Activated CD4-positive, alpha-beta T cell treated with anti-CD3 and anti-CD28 coated beads for 36 hours (primary cell): ENCODE measurements at regions of chr7 and their contacts with region 1.

Region 1: DNA sequence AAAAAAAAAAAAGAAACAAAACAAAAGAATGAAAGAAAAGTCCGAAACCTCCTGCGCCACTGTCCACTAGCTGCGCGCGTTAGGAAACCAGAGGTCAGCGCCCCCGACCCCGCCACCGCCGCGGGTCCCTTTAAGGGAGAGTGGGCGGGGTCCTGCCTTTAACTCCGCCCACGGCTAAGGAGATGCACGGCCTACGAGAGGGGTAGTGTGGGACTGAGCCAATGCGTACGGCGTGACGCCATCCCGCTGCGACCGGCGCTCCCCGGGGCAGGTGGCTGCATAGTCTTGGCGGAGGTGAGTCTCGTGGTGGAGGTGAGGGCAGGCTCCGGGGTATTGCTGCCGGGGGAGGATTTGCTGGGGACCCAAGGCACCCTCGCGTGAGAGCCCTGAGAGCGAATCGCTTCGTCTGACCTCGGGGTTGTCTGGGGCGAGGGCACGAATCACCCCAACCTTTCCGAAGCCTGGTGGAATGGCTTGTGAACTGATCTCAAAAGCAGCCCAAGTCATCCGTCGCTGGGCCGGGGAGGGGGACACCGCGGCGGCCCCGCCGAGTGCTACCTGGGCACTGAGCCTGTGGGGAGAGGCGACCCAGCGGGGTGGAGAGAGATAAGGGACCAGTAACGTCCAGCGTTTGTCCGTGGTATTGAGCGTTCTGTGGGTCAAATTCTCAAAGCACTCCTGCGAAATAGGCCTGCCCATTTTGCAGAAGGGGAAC is at the start of gene MRPS17:
- DNase-seq: peak; percentile 96
- ATAC-seq: peak; percentile 100
- H3K4me3 Mint-ChIP-seq: peak within 1 kb of the TSS; percentile 98
- H3K27ac Mint-ChIP-seq: peak within 1 kb of the TSS; percentile 97
- H3K4me1 Mint-ChIP-seq: peaks cover 16% of the 10 kb centered on the region
- H3K27me3 Mint-ChIP-seq: peaks cover 2% of the 10 kb centered on the region
- total RNA-seq, gene MRPS17: 16.6 to 26.8 TPM

Region 2: GRCh38 chr7:55774326-55775064 is 177.3 kb before region 1 on chr7:
- CTCF ChIA-PET with region 1: no interaction called
- POLR2A ChIA-PET with region 1: no interaction called
- intact Hi-C with region 1: loop called in 1 of 2 experiments (anchors 10 kb)
- DNase-seq: no peak
- ATAC-seq: no peak
- H3K4me3 Mint-ChIP-seq: no peak overlapping the region
- H3K27ac Mint-ChIP-seq: no peak overlapping the region
- H3K4me1 Mint-ChIP-seq: no peaks in the 10 kb centered on the region
- H3K27me3 Mint-ChIP-seq: no peaks in the 10 kb centered on the region

Region 3: GRCh38 chr7:55964261-55965099 is 12.7 kb after region 1 on chr7 and contains the start of gene NIPSNAP2:
- CTCF ChIA-PET with region 1: interaction called, 6 read pairs
- POLR2A ChIA-PET with region 1: no interaction called
- intact Hi-C with region 1: loop called (anchors 1 kb)
- DNase-seq: peak; percentile 81
- ATAC-seq: peak; percentile 92
- H3K4me3 Mint-ChIP-seq: peak within 1 kb of the TSS; percentile 86
- H3K27ac Mint-ChIP-seq: peak within 1 kb of the TSS; percentile 90
- H3K4me1 Mint-ChIP-seq: peaks cover 33% of the 10 kb centered on the region
- H3K27me3 Mint-ChIP-seq: no peaks in the 10 kb centered on the region
- total RNA-seq, gene NIPSNAP2: 60.5 to 69.8 TPM

Region 4: DNA sequence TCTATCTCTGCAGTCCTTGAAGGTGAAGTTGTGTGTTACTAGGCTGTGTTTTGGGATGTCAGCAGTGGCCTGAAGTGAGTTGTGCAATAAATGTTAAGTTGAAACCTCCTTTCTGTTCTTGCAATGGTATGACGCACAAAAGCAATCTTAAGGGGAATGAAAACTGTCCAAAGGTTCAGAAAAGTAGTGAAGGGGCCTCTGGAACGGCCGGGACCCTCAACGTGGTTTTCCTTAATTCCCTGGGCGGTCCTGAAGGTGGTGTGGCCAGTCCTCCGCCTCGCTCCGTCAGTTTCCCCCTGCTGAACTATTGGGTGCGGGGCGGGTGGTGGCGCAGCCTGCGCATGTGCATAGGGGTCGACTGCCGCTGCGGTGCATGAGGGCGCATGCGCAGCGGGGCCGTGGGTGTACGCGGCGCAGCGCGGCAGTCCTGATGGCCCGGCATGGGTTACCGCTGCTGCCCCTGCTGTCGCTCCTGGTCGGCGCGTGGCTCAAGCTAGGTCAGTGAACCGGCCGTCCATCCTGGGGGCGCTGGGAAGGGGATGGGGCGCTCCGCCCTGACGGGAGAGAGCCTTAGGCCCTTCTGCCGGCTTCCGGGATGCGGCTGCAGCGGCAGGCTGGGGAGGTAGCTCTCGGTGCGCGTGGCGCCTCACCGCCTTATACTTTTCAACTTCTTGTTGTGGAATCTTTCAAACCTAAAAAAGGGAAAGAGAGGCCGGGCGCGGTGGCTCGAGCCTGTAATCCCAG is 112.3 kb after region 1 on chr7 and contains the start of gene SUMF2:
- CTCF ChIA-PET with region 1: no interaction called
- POLR2A ChIA-PET with region 1: no interaction called
- intact Hi-C with region 1: loop called in 1 of 2 experiments (anchors 1 kb)
- DNase-seq: peak; percentile 93
- ATAC-seq: peak; percentile 91
- H3K4me3 Mint-ChIP-seq: peak within 1 kb of the TSS; percentile 91
- H3K27ac Mint-ChIP-seq: peak within 1 kb of the TSS; percentile 91
- H3K4me1 Mint-ChIP-seq: peaks cover 45% of the 10 kb centered on the region
- H3K27me3 Mint-ChIP-seq: no peaks in the 10 kb centered on the region
- total RNA-seq, gene SUMF2: 117 to 128 TPM